ENCODE measurements at regions of chr19 and their contacts with region 1.

Region 1: DNA sequence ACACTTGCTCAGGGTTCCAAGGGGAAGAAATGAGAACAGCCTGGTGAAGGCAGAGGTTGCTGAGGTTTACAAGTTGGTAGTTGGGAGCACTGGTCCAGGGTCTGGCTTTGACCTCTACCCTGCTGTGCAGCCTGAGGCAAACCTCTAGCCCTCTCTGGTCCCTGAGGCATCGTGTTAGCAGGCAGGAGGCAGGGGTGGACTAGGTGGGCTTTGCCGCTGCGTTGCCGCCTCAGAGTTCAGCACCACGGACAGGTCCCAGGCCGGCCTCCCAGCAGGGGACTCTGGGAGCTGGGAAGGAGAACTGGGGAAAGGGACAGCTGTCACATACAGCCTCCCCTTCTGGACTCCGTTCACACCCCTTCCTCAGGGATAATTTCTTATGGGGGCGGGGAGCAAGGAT is 3.1 kb downstream of the NCAN start:
- DNase-seq: no peak
- H3K4me3 ChIP-seq: no peak overlapping the region
- H3K27me3 ChIP-seq: peaks cover 12% of the 10 kb centered on the region
- CTCF ChIP-seq: no peak

Region 2: GRCh38 chr19:19053508-19054314 is 161.2 kb before region 1 on chr19:
- CTCF ChIA-PET with region 1: no interaction called
- POLR2A ChIA-PET with region 1: no interaction called
- DNase-seq: no peak
- H3K4me3 ChIP-seq: no peak overlapping the region
- H3K27me3 ChIP-seq: no peaks in the 10 kb centered on the region
- CTCF ChIP-seq: peak; percentile 75

Region 3: GRCh38 chr19:19224852-19225494 is 10.1 kb after region 1 on chr19:
- CTCF ChIA-PET with region 1: interaction called, 12 read pairs
- POLR2A ChIA-PET with region 1: no interaction called
- DNase-seq: no peak
- H3K4me3 ChIP-seq: peak overlapping the region; percentile 23
- H3K27me3 ChIP-seq: peaks cover 8% of the 10 kb centered on the region
- CTCF ChIP-seq: peak; percentile 75